ENCODE measurements at regions of chrX and their contacts with region 1.

Region 1: DNA sequence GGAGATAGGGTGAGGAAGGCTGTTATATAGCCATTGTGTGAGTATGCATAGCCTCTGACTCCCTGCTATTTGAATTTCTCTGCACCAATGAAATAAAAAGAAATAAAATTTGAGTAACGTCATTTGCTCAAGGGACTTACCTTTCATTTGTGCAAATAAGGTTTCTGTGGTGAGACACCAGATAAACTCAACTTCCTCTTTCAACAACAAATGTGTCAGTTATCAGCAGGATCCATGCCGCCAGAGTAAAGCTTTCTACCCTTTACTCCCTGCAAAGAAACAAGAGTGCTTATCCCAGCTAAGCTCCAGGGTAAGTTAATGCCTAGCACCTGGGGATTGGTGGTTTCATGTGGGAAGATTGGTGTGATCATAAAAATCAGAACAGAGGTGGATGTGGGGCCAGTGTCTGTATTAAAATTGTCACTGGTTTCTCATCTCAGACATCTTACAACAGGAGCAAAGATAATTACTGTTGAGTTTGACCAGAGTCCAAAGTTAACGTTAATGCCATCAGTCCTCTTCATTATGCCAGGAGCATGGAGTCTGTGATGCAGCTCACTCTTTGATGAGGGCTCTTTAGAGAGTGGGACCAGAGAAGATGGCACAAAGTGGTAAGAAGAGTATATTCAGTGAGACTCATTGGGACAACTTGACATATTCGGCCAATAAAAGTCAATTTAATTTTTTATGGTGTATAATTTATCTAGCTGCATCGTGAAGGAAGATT is at the start of gene P2RY10:
- DNase-seq: peak; percentile 38
- H3K4me3 Mint-ChIP-seq: peak within 1 kb of the TSS; percentile 85
- H3K27ac Mint-ChIP-seq: peak within 1 kb of the TSS; percentile 90
- H3K4me1 Mint-ChIP-seq: peaks cover 44% of the 10 kb centered on the region
- H3K27me3 Mint-ChIP-seq: no peaks in the 10 kb centered on the region
- total RNA-seq, gene P2RY10: 38.8 to 39.3 TPM

Region 2: DNA sequence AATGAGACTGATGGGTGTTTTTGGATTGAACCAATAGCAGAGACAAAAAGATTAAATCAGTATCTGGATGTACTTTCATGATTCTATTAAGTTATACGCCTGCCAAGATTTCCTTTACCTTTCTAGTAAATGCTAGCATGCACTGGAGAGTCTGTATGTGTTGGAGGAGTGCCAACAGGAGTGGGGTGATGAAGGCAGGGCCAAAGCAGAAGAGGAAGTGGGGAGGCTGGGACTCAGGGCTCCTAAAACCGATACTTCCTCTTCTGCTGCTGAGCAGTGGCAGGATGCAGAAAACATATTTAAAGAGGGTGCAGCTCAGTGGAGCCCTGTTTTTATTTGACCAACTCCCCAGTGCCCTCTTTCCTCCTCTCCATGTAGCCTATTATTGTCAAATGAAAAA is 623.5 kb before region 1 on chrX:
- CTCF ChIA-PET with region 1: no interaction called
- POLR2A ChIA-PET with region 1: no interaction called
- intact Hi-C with region 1: loop called (anchors 10 kb)
- DNase-seq: peak; percentile 64
- H3K4me3 Mint-ChIP-seq: peak overlapping the region; percentile 45
- H3K27ac Mint-ChIP-seq: peak overlapping the region; percentile 81
- H3K4me1 Mint-ChIP-seq: peaks cover 32% of the 10 kb centered on the region
- H3K27me3 Mint-ChIP-seq: no peaks in the 10 kb centered on the region

Region 3: GRCh38 chrX:78493180-78493579 is 452.2 kb before region 1 on chrX:
- CTCF ChIA-PET with region 1: no interaction called
- POLR2A ChIA-PET with region 1: no interaction called
- intact Hi-C with region 1: no loop called
- DNase-seq: no peak
- H3K4me3 Mint-ChIP-seq: no peak overlapping the region
- H3K27ac Mint-ChIP-seq: no peak overlapping the region
- H3K4me1 Mint-ChIP-seq: peaks cover 5% of the 10 kb centered on the region
- H3K27me3 Mint-ChIP-seq: no peaks in the 10 kb centered on the region

Region 4: GRCh38 chrX:78796916-78797315 is 148.4 kb before region 1 on chrX:
- CTCF ChIA-PET with region 1: no interaction called
- POLR2A ChIA-PET with region 1: no interaction called
- intact Hi-C with region 1: no loop called
- DNase-seq: no peak
- H3K4me3 Mint-ChIP-seq: no peak overlapping the region
- H3K27ac Mint-ChIP-seq: no peak overlapping the region
- H3K4me1 Mint-ChIP-seq: peaks cover 3% of the 10 kb centered on the region
- H3K27me3 Mint-ChIP-seq: no peaks in the 10 kb centered on the region

Region 5: DNA sequence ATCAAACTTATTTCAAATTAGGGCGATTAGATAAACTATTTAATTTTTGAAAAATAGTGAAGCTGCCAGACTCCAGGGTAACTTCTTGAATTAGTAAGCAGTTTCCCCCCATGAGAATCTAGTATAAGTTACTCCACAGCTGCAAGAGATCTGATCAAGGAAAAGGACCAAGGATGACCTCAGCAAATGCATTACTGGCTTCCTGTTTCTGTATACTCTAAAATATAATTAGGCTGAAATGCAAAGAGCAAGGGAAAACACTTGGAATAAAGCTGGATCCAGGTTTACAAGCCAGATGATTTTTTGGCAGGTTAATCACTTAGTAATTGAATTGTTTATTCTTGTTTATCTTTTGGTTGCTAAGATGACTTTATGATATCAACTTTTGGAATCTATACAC is 13.5 kb before region 1 on chrX:
- CTCF ChIA-PET with region 1: no interaction called
- POLR2A ChIA-PET with region 1: no interaction called
- intact Hi-C with region 1: no loop called
- DNase-seq: no peak
- H3K4me3 Mint-ChIP-seq: no peak overlapping the region
- H3K27ac Mint-ChIP-seq: no peak overlapping the region
- H3K4me1 Mint-ChIP-seq: no peaks in the 10 kb centered on the region
- H3K27me3 Mint-ChIP-seq: no peaks in the 10 kb centered on the region

Region 6: DNA sequence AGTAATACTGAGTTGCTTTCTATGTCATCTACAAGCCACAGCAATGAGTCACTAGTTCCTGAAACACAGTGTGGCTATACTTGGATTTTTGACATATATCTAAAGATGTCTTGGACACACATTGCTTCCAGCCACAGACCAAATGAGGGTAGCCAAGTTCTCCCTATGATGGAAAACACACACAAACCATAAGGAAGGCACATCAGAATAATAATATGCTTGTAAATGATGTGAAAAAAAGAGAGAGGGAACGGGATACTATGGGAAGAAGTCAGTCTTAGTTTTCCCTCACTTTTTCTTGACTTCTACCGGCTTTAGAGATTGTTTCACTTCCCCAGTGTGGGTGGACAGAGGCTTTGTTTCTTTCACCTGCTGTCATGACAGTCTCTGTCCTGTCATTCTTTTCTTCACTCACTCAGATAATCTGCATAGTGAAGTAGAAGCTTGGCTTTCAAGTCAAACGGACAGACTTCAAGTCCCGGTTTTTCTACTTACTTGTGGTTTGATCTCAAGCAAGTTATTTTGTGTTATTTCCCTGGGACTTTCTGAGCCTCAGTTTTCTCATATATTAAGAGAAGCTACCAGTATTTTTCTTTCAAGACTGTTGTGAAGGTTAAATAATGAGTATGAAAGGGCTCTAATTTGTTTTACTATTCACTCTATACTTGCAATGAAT is 34.6 kb after region 1 on chrX:
- CTCF ChIA-PET with region 1: no interaction called
- POLR2A ChIA-PET with region 1: no interaction called
- intact Hi-C with region 1: loop called (anchors 1 kb)
- DNase-seq: peak; percentile 20
- H3K4me3 Mint-ChIP-seq: peak overlapping the region; percentile 73
- H3K27ac Mint-ChIP-seq: peak overlapping the region; percentile 97
- H3K4me1 Mint-ChIP-seq: peaks cover 18% of the 10 kb centered on the region
- H3K27me3 Mint-ChIP-seq: no peaks in the 10 kb centered on the region

Region 7: DNA sequence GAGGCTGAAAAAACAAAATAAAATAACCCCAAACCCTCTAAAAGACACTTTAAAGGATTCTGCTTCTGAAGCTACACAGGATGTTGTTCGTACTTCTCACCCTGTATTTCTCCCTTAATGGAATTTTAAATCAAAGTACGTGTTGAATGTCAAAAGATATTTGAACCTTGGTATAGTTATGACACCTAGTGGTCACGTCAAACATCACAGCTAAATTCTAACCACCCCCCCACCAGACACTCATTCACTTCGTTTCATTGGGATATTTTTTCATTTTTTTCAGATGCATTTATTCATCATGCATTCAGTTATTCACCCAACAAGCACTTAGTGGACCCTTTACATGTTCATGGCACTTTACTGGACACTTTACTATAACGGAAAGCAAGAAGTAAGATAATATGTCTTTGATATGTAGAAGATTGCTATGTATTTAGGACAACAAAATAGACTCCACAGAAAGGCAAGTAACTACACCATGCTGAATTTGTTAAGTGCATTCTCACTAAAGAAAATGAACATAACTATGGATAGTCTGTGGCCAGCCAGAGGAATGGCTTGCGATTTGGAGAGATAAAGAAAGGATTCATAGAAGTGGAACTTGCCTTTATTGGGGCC is 136.7 kb after region 1 on chrX:
- CTCF ChIA-PET with region 1: interaction called, 6 read pairs
- POLR2A ChIA-PET with region 1: interaction called, 4 read pairs
- intact Hi-C with region 1: loop called (anchors 2 kb)
- DNase-seq: peak; percentile 30
- H3K4me3 Mint-ChIP-seq: peak overlapping the region; percentile 69
- H3K27ac Mint-ChIP-seq: peak overlapping the region; percentile 79
- H3K4me1 Mint-ChIP-seq: peaks cover 41% of the 10 kb centered on the region
- H3K27me3 Mint-ChIP-seq: no peaks in the 10 kb centered on the region

Region 8: DNA sequence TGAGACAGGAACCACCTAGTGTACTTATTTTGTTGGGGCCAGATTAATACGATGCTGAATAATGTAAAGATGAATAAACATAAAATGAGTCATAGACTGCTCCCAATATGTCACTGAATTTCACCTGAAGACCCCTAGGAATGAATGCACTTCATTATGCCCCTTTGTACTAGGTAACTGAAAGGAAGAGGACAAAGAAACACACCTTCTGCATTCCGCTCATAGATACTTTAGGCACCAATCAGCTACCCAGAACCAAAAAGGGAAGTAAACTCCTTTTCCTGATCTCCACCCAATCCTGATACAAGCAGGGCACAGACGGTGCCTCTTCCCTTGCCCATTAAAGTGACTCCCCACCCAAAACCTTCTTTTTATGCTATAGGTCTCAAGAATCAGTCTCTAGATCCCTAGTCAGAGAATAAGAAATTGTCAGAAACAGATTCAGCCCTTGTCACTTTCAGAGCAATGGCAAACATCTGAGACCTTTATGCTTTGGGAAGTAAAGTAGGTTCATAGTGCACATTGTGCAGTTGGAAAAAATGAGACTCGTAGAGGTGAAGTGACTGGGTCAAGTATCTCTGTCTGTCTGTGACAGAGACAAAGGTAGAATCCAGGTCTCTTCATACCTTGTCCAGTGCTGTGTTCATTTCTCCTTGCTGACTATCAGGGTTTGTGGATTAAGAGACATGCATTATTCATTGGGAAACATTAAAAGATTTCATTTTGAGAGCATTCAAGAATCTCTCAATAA is 201.5 kb after region 1 on chrX:
- CTCF ChIA-PET with region 1: no interaction called
- POLR2A ChIA-PET with region 1: no interaction called
- intact Hi-C with region 1: loop called (anchors 2 kb)
- DNase-seq: peak; percentile 10
- H3K4me3 Mint-ChIP-seq: peak overlapping the region; percentile 93
- H3K27ac Mint-ChIP-seq: peak overlapping the region; percentile 95
- H3K4me1 Mint-ChIP-seq: peaks cover 35% of the 10 kb centered on the region
- H3K27me3 Mint-ChIP-seq: no peaks in the 10 kb centered on the region

Region 9: DNA sequence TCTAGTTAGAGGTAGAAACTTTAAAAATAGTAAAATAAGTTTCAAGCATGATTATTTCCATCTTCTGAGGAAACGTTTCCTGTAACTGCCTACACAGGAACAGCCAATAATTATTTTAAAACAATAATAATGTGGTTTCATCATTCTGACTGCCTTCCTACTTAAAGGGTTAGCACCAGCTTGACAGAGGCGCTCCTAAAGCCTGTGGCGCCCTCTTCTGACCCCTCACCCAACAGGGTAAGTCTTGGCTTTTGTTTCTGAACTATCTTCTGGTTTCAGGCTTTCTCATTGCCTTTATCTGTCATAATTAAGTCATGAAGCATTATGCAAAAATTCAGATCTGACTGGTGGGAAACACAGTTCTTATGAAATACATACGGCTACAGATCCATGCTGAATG is 325.1 kb after region 1 on chrX:
- CTCF ChIA-PET with region 1: no interaction called
- POLR2A ChIA-PET with region 1: no interaction called
- intact Hi-C with region 1: loop called (anchors 2 kb)
- DNase-seq: peak; percentile 87
- H3K4me3 Mint-ChIP-seq: peak overlapping the region; percentile 26
- H3K27ac Mint-ChIP-seq: peak overlapping the region; percentile 85
- H3K4me1 Mint-ChIP-seq: peaks cover 45% of the 10 kb centered on the region
- H3K27me3 Mint-ChIP-seq: no peaks in the 10 kb centered on the region